GM13977 (cell line): ENCODE measurements at regions of chr6 and their contacts with region 1.

Region 1: GRCh38 chr6:87929843-87930288 is 117.8 kb upstream of the SPACA1 start:
- DNase-seq: peak; percentile 68
- CTCF ChIP-seq: peak; percentile 92

Region 2: DNA sequence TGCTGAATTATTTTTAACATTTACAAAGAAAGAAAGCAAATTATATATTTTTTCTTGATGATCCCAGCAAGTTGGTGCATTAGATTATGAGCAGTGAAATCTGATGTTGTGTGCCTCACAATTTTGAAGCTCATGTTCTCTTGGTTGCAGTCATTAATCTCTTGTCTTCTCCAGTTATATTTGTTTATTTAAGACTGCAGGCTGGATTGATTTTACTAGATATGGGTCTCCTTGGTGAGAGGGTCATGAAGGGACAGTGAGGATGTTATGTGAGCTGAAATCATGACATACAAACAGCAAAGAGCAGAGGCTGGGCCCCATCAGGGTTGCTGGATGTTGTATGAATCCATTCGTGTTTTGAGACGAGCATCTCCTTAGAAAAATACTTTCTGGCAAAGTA is 163.7 kb before region 1 on chr6:
- in situ Hi-C with region 1: no loop called
- DNase-seq: no peak
- CTCF ChIP-seq: no peak

Region 3: DNA sequence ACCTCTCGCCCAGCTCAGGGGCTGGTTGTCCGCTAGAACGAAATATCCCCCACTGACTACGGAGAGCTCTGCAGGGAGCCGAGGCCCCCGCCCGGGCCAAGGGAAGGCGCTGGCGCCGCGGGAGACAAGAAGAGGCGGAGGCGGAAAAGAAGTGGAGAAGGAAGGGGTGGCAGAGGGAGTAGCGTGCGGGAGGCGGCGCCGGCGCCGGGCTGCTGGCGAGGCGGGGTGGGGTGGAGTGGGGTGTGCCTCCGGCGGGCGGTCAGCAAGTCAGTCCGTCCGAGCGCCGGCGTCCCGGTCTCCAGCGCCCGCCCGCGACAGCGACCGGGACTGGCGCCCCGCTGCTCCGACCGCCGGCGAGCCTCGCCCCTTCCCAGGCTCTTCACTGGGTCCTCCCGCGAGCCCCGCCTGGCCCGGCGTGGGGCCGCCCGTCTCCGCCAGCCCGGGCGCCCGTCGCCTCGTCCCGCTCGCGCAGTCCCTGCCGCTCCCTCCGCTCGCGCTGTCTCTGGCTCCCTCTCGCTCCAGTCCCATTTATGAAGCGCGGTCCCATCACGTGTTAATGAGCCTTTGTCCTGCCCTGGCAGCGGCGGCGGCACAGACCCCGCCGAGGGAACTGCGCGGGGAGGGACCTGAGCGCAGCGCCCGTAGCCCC is 236.1 kb after region 1 on chr6 and contains the start of gene CNR1:
- in situ Hi-C with region 1: loop called (anchors 10 kb)
- DNase-seq: no peak
- CTCF ChIP-seq: peak; percentile 67

Region 4: DNA sequence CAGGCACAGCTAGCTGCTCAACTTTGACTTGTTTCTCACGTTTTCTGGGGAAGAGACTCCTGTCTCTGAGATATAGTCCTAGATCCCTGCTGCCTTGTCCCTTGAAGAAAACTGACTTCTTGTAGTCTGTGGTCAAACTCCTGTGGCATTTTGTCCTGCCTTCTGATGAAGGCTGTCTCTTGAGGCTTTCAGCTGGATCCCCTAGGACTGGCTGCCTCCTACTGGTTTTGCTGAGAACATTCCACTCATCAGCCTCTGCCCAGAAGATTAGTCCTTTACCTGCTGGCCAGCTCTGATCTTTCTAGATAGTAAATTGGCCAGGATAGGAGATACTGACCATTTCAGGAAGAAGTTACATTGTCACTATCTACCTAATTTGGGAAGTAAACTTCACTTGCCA is 308.2 kb after region 1 on chr6:
- in situ Hi-C with region 1: loop called (anchors 10 kb)
- DNase-seq: peak; percentile 58
- CTCF ChIP-seq: peak; percentile 79

Region 5: GRCh38 chr6:88780714-88781389 is 851.0 kb after region 1 on chr6:
- in situ Hi-C with region 1: loop called (anchors 10 kb)
- DNase-seq: no peak
- CTCF ChIP-seq: peak; percentile 62

Region 6: GRCh38 chr6:88870717-88871330 is 941.0 kb after region 1 on chr6:
- in situ Hi-C with region 1: loop called (anchors 25 kb)
- DNase-seq: peak; percentile 10
- CTCF ChIP-seq: peak; percentile 51